A549 (cell line): ENCODE measurements at regions of chr5 and their contacts with region 1.

Region 1: GRCh38 chr5:78717674-78718625 is 69.4 kb upstream of the LHFPL2 start:
- DNase-seq: no peak
- ATAC-seq: peak; percentile 9 to 27; a peak in 1 of 6 replicates
- H3K4me3 ChIP-seq: no peak overlapping the region
- H3K27ac ChIP-seq: peak overlapping the region; percentile 74 to 78
- H3K4me1 ChIP-seq: peaks cover 67% of the 10 kb centered on the region
- CTCF ChIP-seq: no peak
- EP300 ChIP-seq: no peak
- POLR2A ChIP-seq: no peak
- RAD21 ChIP-seq: no peak

Region 2: DNA sequence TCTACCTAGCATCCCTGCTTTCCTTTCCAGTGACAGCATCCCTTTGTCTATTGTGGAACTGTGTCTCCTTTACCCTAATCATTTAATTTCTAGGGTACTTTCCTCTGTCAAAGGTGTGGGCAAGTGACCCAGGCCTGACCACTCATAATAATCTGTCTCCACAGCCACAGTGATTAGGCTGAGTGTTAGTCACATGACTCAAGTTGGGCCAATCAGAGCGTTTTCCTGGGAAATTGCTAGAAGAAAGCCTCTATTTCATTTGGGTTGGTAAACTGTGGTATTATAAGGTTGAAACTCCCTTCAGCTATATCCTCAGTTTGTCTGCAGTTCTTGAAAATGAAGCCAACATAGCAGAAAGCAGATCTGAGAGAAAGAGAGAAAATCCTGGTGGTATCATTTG is 409.2 kb before region 1 on chr5:
- CTCF ChIA-PET with region 1: no interaction called
- POLR2A ChIA-PET with region 1: no interaction called
- DNase-seq: no peak
- ATAC-seq: no peak
- H3K4me3 ChIP-seq: no peak overlapping the region
- H3K27ac ChIP-seq: no peak overlapping the region
- H3K4me1 ChIP-seq: no peaks in the 10 kb centered on the region
- CTCF ChIP-seq: no peak
- EP300 ChIP-seq: no peak
- POLR2A ChIP-seq: no peak
- RAD21 ChIP-seq: no peak

Region 3: DNA sequence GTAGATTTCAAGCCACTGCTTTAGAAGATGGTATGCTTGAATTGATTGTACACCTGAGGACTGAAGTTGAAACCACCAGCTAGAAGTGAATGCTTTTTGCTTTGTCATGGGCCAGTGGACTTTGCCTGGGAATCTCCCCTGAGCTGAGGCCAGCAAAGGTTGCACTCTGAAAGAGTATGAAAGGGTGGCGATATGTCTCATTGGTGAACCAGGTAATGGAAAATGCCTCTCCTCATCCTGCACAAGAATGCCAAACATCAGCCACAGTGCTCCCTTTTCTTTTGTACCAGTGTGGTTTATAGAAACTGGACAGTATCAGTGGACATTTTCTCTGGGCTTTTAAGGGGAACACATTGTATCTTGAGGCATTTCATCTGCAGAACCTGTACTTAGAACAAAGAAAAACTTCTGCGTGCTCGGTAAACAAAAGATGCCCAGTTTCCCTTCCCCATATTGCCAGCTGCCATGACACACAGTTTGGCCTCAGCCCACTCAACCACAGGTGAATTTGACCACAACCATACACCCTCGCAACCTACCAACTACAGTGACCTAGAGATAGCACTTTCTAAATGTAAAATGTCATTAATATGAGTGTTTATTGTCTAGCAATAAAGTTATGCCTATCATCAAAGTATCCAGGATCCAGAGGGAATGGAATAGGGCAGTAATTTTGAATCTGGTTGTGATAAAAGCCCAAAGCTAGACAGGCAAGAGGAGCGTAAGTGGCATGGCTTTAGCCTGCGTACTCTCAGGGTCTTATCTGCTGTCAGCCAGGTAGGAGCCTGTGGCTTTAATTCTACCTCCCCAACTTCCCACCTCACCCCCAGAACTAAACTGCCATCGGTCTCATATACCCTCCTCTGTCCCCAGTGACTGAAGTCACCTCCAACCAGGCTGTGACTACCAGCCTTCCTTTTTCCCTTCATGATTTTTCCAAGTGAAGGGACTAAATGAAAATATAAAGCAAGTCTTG is 10.1 kb after region 1 on chr5:
- CTCF ChIA-PET with region 1: interaction called, 13 read pairs
- POLR2A ChIA-PET with region 1: no interaction called
- DNase-seq: peak; percentile 51 to 78
- ATAC-seq: peak; percentile 72 to 84; a peak in 5 of 6 replicates
- H3K4me3 ChIP-seq: no peak overlapping the region
- H3K27ac ChIP-seq: peak overlapping the region; percentile 73 to 79
- H3K4me1 ChIP-seq: peaks cover 55% of the 10 kb centered on the region
- CTCF ChIP-seq: no peak
- EP300 ChIP-seq: no peak
- POLR2A ChIP-seq: no peak
- RAD21 ChIP-seq: no peak

Region 4: GRCh38 chr5:79181419-79182022 is 463.6 kb after region 1 on chr5:
- CTCF ChIA-PET with region 1: no interaction called
- POLR2A ChIA-PET with region 1: no interaction called
- DNase-seq: no peak
- ATAC-seq: peak; percentile 24 to 47; a peak in 2 of 6 replicates
- H3K4me3 ChIP-seq: no peak overlapping the region
- H3K27ac ChIP-seq: no peak overlapping the region
- H3K4me1 ChIP-seq: no peaks in the 10 kb centered on the region
- CTCF ChIP-seq: no peak
- EP300 ChIP-seq: no peak
- POLR2A ChIP-seq: no peak
- RAD21 ChIP-seq: no peak